H1 (cell line): ENCODE measurements at regions of chr21 and their contacts with region 1.

Region 1: GRCh38 chr21:39601187-39601928 is 11.4 kb upstream of the B3GALT5 start:
- DNase-seq: no peak
- H3K4me3 ChIP-seq: no peak overlapping the region
- H3K27ac ChIP-seq: no peak overlapping the region
- H3K4me1 ChIP-seq: no peaks in the 10 kb centered on the region; a peak in 1 of 7 replicates
- H3K27me3 ChIP-seq: no peaks in the 10 kb centered on the region
- CTCF ChIP-seq: no peak
- EP300 ChIP-seq: no peak
- POLR2A ChIP-seq: no peak
- RAD21 ChIP-seq: no peak

Region 2: GRCh38 chr21:39581414-39581813 is 19.9 kb before region 1 on chr21:
- CTCF ChIA-PET with region 1: interaction called, 10 read pairs
- POLR2A ChIA-PET with region 1: interaction called, 3 read pairs
- DNase-seq: no peak
- H3K4me3 ChIP-seq: no peak overlapping the region
- H3K27ac ChIP-seq: no peak overlapping the region
- H3K4me1 ChIP-seq: peaks cover 0 to 3% (median 2%) of the 10 kb centered on the region in 4 experiments; a peak in 4 of 7 replicates
- H3K27me3 ChIP-seq: no peaks in the 10 kb centered on the region
- CTCF ChIP-seq: peak; percentile 69 to 71 (median 69)
- EP300 ChIP-seq: no peak
- POLR2A ChIP-seq: no peak
- RAD21 ChIP-seq: peak; percentile 37 to 60; a peak in 3 of 4 replicates

Region 3: GRCh38 chr21:39612233-39613040 is 11.1 kb after region 1 on chr21 and contains the start of gene B3GALT5:
- CTCF ChIA-PET with region 1: no interaction called
- POLR2A ChIA-PET with region 1: interaction called, 16 read pairs
- DNase-seq: peak; percentile 33 to 80
- H3K4me3 ChIP-seq: peak within 1 kb of the TSS; percentile 58 to 90 (median 90)
- H3K27ac ChIP-seq: no peak within 1 kb of the TSS; the same call in 1 of the 2 replicates
- H3K4me1 ChIP-seq: peaks cover 10 to 28% (median 16%) of the 10 kb centered on the region in 4 experiments
- H3K27me3 ChIP-seq: no peaks in the 10 kb centered on the region
- CTCF ChIP-seq: peak in 1 of 3 experiments; percentile 32; a peak in 1 of 4 replicates
- EP300 ChIP-seq: no peak
- POLR2A ChIP-seq: no peak; a peak in 1 of 3 replicates
- RAD21 ChIP-seq: peak in 1 of 2 experiments; percentile 33; a peak in 2 of 4 replicates
- total RNA-seq, gene B3GALT5: 23.8 and 25.1 TPM in 2 replicates